Activated naive CD4-positive, alpha-beta T cell treated with anti-CD3 and anti-CD28 coated beads for 36 hours (primary cell): ENCODE measurements at regions of chr15 and their contacts with region 1.

Region 1: DNA sequence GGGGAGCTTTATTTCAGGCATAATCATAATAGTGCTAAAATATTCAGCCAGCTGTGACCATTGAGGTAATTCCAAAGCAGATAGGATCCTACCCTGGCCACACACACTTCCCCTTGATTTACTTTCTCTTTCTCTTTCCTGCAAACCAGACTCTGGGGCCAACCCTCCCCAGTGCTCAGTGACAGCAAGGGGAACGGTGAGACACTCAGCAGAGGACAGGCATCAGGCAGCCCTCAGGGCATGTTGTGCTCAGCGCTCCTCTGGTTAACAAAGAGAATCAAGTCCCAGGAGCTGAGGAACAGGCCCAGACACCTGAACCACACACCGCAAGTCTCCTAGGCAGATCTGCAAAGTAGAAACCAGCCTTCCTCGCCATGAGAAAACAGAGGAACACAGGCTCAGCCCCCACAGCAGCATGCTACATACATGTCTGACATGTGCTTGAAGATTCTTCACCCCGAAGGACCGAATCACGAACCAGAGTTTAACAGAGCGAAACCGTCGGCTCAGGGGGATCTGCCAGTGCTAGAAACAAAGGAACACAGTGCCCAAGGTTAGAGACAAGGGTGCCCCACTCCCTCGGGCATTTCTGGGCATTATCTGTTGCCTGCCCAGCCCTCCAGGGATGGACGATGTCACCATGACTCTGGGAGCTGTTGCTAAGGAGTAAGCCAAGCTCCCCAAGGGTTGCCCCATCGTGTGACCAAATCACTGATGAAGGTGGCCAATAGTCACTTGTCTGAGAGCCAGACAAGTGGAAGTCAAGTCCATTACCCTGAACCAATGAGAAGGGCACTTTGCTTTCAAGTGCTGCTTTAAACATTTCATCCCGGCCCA is 17.5 kb downstream of the HDC start:
- DNase-seq: peak; percentile 88
- H3K4me3 Mint-ChIP-seq: peak overlapping the region; percentile 81
- H3K27ac Mint-ChIP-seq: peak overlapping the region; percentile 99
- H3K4me1 Mint-ChIP-seq: peaks cover 42% of the 10 kb centered on the region
- H3K27me3 Mint-ChIP-seq: no peaks in the 10 kb centered on the region

Region 2: DNA sequence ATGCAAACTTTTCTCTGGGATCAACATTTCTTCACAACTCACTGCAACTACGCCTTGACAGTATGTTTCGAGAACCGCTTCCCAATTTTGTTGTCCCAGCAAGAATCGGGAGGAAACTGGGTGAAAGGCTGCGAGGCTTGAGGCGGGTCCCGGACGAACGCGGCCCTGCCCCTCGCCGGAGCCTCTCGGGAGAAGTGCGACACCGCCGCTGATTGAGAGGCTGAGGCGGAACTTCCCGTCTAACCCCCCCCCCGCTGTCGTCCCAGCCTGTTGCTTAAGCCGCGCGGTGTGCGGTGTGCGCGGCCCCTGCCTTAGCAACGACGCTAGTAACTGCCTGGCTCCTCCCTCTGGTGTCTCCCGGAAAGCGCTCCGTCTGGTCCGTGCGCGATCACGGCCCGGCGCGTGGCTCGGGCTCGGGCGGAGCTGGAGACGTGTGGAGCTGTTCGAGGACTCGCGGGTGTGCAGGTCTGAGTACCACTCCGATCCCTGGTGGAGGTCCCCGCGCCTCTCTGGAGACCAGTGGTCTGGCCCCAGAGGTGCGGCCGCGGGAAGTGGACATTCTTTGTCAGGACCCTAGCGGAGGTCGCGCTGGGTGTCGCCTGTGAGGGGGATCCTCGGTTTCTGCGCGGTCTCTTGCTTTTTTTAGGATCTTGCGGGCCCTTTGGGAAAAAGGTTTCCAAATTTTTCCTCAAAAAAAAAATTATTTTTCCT is 627.2 kb before region 1 on chr15 and contains the starts of genes DTWD1 and FAM227B:
- CTCF ChIA-PET with region 1: no interaction called
- intact Hi-C with region 1: loop called (anchors 5 kb)
- DNase-seq: peak; percentile 96
- H3K4me3 Mint-ChIP-seq: peak within 1 kb of the TSS; percentile 88
- H3K27ac Mint-ChIP-seq: peak within 1 kb of the TSS; percentile 91
- H3K4me1 Mint-ChIP-seq: peaks cover 33% of the 10 kb centered on the region
- H3K27me3 Mint-ChIP-seq: no peaks in the 10 kb centered on the region
- total RNA-seq, gene DTWD1: 18.5 to 19.4 TPM
- total RNA-seq, gene FAM227B: 2.0 to 2.8 TPM

Region 3: DNA sequence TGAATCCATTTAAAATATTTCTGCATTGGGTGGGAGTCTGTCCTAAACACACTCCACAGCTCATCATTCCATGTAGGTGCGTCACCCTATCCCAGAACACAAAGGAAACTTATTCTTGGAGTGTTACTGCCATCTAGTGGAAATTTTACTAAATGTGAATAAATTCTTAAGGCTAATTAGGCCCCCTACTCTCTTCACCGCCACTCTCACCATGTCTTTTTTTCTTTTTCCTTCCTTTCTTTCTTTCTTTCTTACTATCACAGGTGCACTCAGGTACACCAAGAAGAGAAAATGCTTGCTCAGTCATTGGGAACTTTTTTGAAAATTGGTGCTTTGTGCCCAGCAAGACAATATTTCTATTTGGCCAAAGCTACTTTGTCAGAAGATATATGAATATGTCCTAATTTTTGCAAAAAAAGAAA is 102.6 kb before region 1 on chr15:
- CTCF ChIA-PET with region 1: no interaction called
- intact Hi-C with region 1: no loop called
- DNase-seq: no peak
- H3K4me3 Mint-ChIP-seq: no peak overlapping the region
- H3K27ac Mint-ChIP-seq: no peak overlapping the region
- H3K4me1 Mint-ChIP-seq: peaks cover 13% of the 10 kb centered on the region
- H3K27me3 Mint-ChIP-seq: no peaks in the 10 kb centered on the region

Region 4: GRCh38 chr15:50182219-50183013 is 65.6 kb before region 1 on chr15:
- CTCF ChIA-PET with region 1: no interaction called
- intact Hi-C with region 1: loop called (anchors 1 kb)
- DNase-seq: peak; percentile 73
- H3K4me3 Mint-ChIP-seq: peak overlapping the region; percentile 98
- H3K27ac Mint-ChIP-seq: peak overlapping the region; percentile 87
- H3K4me1 Mint-ChIP-seq: peaks cover 29% of the 10 kb centered on the region
- H3K27me3 Mint-ChIP-seq: peaks cover 25% of the 10 kb centered on the region

Region 5: GRCh38 chr15:50278496-50278895 is 30.5 kb after region 1 on chr15:
- CTCF ChIA-PET with region 1: no interaction called
- intact Hi-C with region 1: loop called (anchors 1 kb)
- DNase-seq: no peak
- H3K4me3 Mint-ChIP-seq: no peak overlapping the region
- H3K27ac Mint-ChIP-seq: peak overlapping the region; percentile 78
- H3K4me1 Mint-ChIP-seq: peaks cover 42% of the 10 kb centered on the region
- H3K27me3 Mint-ChIP-seq: no peaks in the 10 kb centered on the region

Region 6: GRCh38 chr15:50315814-50316630 is 68.0 kb after region 1 on chr15:
- CTCF ChIA-PET with region 1: interaction called, 5 read pairs
- intact Hi-C with region 1: loop called (anchors 5 kb)
- DNase-seq: no peak
- H3K4me3 Mint-ChIP-seq: no peak overlapping the region
- H3K27ac Mint-ChIP-seq: no peak overlapping the region
- H3K4me1 Mint-ChIP-seq: peaks cover 25% of the 10 kb centered on the region
- H3K27me3 Mint-ChIP-seq: no peaks in the 10 kb centered on the region

Region 7: DNA sequence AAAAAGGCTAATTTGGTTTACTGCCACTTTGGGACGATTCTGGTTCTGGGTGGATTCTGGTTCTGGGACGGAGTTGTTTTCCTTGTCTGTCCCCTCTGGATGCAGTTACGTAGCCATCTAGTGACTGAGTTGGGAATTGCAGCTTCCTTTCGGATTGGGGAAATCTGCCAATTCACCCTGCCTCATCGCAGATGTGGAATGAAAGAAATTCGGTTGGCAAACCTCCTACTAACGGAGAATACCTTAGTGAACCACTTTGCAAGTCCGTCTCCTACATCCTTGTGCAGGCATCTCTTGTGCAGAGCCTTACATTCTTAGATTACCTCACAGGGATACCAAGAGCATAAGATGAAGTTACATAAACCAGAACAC is 628.9 kb after region 1 on chr15:
- CTCF ChIA-PET with region 1: no interaction called
- intact Hi-C with region 1: loop called (anchors 5 kb)
- DNase-seq: peak; percentile 85
- H3K4me3 Mint-ChIP-seq: peak overlapping the region; percentile 75
- H3K27ac Mint-ChIP-seq: peak overlapping the region; percentile 46
- H3K4me1 Mint-ChIP-seq: peaks cover 53% of the 10 kb centered on the region
- H3K27me3 Mint-ChIP-seq: peaks cover 4% of the 10 kb centered on the region